ENCODE measurements at regions of chr10 and their contacts with region 1.

Region 1: DNA sequence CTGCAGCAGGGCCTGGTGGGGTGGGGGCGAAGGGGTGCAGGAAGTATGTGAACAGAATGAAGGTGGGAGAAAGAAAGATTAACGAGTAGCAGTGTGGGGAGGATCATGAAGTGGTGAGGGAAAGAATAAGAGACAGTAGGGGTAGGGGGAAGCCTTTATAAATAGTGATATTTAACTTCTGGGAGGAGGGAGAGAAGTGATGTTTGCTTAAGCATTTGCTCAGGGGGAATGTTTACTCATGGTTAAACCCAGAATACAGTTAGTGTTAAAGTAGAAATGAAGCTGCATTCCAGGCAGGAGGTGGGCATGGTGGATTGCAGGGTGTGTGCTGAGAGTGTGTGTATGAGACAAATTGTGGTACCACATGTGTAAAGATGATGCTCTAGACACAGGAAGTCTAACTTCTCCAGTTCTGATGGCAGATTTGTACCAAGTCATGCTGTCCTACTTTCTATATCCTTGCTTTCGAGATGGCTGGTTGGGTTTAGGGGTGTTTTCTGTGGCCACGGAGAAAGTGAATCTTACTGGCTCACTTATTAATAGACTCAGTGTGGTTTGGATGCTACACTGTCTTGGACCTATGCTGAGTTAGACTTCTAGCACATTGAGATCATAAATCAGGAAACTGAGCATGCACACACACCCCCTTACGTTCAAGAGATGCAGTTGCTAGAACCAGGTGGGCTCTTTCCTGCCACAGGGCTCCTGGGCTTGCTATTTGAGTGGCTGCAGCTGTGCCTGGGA is 10.6 kb upstream of the DNMBP start:
- DNase-seq: no peak
- ATAC-seq: peak; percentile 30; the same call in 1 of the 2 replicates
- H3K4me3 ChIP-seq: no peak overlapping the region
- H3K27ac ChIP-seq: no peak overlapping the region
- H3K4me1 ChIP-seq: peaks cover 13 to 31% of the 10 kb centered on the region in 2 experiments
- H3K27me3 ChIP-seq: no peaks in the 10 kb centered on the region
- CTCF ChIP-seq: no peak
- POLR2A ChIP-seq: no peak
- RAD21 ChIP-seq: no peak

Region 2: DNA sequence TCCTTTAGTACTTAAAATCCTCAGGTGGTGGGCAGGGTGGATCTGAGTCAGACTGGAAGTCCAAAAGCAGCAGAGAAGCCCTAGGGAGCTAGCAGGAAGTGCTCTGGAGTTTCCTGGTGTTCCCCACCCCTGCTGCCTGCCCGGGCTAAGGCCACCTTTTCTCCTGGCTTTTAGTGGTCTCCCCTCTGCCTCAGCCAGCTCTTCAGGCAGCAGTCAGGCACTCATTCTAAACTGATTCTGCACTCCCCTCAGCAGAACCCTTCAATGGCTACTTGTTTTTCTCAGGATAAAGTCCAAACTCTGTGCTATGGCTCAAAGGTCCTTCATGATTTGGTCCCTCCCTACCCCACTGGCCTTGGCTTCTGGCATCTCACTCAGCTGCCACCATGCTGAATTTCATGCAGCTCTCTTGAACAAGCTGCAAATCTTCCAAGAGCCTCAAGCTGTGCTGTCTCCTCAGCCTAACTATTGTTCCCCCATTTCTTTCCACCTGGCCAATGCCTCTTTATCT is 18.3 kb after region 1 on chr10:
- CTCF ChIA-PET with region 1: interaction called, 3 read pairs
- POLR2A ChIA-PET with region 1: interaction called, 4 read pairs
- RAD21 ChIA-PET with region 1: no interaction called
- intact Hi-C with region 1: loop called (anchors 2 kb)
- DNase-seq: no peak
- ATAC-seq: peak; percentile 47
- H3K4me3 ChIP-seq: no peak overlapping the region
- H3K27ac ChIP-seq: no peak overlapping the region
- H3K4me1 ChIP-seq: peaks cover 28 to 39% of the 10 kb centered on the region in 2 experiments
- H3K27me3 ChIP-seq: no peaks in the 10 kb centered on the region
- CTCF ChIP-seq: no peak
- POLR2A ChIP-seq: no peak
- RAD21 ChIP-seq: no peak

Region 3: GRCh38 chr10:100065084-100065660 is 44.9 kb after region 1 on chr10:
- CTCF ChIA-PET with region 1: no interaction called
- POLR2A ChIA-PET with region 1: no interaction called
- RAD21 ChIA-PET with region 1: no interaction called
- intact Hi-C with region 1: no loop called
- DNase-seq: no peak
- ATAC-seq: no peak
- H3K4me3 ChIP-seq: no peak overlapping the region
- H3K27ac ChIP-seq: no peak overlapping the region
- H3K4me1 ChIP-seq: peaks cover 0 to 4% of the 10 kb centered on the region in 2 experiments; a peak in 1 of 4 replicates
- H3K27me3 ChIP-seq: no peaks in the 10 kb centered on the region
- CTCF ChIP-seq: no peak
- POLR2A ChIP-seq: no peak
- RAD21 ChIP-seq: no peak